ENCODE measurements at regions of chr17 and their contacts with region 1.

Region 1: DNA sequence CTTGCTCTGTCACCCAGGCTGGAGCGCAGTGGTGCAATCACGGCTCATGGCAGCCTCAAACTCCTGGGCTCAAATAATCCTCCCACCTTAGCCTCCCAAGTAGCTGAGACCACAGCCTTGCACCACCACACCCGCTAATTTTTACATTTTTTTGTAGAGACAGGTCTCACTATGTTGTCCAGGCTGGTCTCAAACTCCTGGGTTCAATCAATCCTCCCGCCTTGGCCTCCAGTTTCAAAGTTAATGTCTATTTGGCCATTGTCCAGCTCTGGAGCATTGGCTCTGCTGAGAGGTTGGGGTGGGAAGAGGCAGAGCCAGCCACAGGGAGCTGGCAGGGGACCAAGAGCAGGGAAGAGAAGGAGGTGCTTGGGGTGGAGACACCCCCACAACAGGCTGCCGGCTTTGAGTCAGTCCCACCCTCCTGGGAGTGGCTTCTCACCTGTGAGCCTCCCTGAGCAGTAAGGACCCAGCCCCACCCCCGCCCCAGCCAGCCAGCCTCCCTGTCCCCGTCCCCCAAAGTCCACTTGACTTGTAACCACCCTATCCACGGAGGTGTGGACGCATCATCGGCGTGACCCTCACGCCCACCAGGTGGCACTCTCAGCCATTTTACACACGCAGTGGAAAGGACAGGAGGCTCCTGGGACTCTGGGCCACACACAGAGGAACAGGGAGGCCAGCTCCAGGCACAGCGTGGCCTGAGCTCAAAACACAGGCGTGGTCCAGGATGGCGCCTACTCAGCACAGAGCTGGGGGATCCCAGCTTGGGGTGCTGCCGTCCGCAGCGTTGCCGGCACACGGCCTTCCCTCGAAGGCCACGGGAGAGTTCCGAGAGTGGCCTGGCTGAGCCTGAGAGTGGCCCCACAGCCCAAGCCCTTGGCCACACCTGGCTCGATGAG is 22.8 kb upstream of the PVALEF start:
- DNase-seq: peak; percentile 71 to 88 (median 81)
- ATAC-seq: peak; percentile 90 to 97 (median 94)
- H3K4me3 ChIP-seq: no peak overlapping the region
- H3K27ac ChIP-seq: no peak overlapping the region
- H3K4me1 ChIP-seq: peaks cover 0 to 9% (median 4%) of the 10 kb centered on the region in 12 donors
- H3K27me3 ChIP-seq: no peaks in the 10 kb centered on the region
- CTCF ChIP-seq: peak; percentile 57 to 82 (median 70)
- POLR2A ChIP-seq: no peak

Region 2: GRCh38 chr17:81200695-81201580 is 58.4 kb after region 1 on chr17:
- intact Hi-C with region 1: loop called in 5 of 10 experiments (anchors 1 to 5 kb)
- DNase-seq: peak in 4 of 5 donors; percentile 46 to 61 (median 55)
- ATAC-seq: peak; percentile 29 to 75 (median 62)
- H3K4me3 ChIP-seq: no peak overlapping the region
- H3K27ac ChIP-seq: no peak overlapping the region
- H3K4me1 ChIP-seq: peaks cover 0 to 19% (median 8%) of the 10 kb centered on the region in 12 donors
- H3K27me3 ChIP-seq: no peaks in the 10 kb centered on the region
- CTCF ChIP-seq: peak; percentile 51 to 69 (median 56)
- POLR2A ChIP-seq: no peak

Region 3: DNA sequence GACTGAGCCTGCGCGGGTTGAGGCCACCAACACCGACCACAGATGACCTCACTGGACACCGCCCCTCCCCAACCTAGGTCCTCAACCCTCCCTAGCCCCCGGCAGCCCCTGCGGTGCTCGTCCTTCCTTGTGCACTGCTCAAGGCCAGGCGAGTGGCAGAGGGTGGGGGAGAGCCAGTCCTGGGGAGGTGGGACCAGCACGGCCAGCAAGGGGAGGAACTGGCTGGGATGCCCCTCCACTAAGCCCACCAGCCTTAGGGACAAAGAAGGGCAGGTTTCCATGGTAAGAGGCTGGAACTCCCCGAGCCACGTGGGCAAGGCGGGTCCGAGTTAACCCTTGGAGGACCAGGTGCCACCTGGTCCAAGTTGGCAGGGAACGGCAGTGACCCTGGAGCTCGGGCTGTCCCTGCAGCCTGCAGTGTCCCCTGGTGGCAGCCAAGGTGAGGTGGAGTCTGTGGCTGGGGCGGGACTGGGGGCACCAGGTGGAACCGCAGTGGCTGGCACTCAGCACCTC is 394.8 kb after region 1 on chr17:
- intact Hi-C with region 1: loop called in 1 of 10 experiments (anchors 5 kb)
- DNase-seq: no peak
- ATAC-seq: peak; percentile 37 to 68 (median 55)
- H3K4me3 ChIP-seq: no peak overlapping the region
- H3K27ac ChIP-seq: no peak overlapping the region
- H3K4me1 ChIP-seq: peaks cover 0 to 21% (median 16%) of the 10 kb centered on the region in 12 donors
- H3K27me3 ChIP-seq: peaks cover 0 to 36% (median 30%) of the 10 kb centered on the region in 9 donors
- CTCF ChIP-seq: peak; percentile 50 to 73 (median 65)
- POLR2A ChIP-seq: no peak

Region 4: GRCh38 chr17:82205719-82206508 is 1063.4 kb after region 1 on chr17:
- intact Hi-C with region 1: no loop called
- DNase-seq: peak; percentile 81 to 91 (median 84)
- ATAC-seq: peak; percentile 57 to 87 (median 86)
- H3K4me3 ChIP-seq: peak overlapping the region in 7 of 12 donors; percentile 11 to 41 (median 17)
- H3K27ac ChIP-seq: peak overlapping the region in 11 of 12 donors; percentile 15 to 86 (median 48)
- H3K4me1 ChIP-seq: peaks cover 0 to 19% (median 8%) of the 10 kb centered on the region in 12 donors
- H3K27me3 ChIP-seq: no peaks in the 10 kb centered on the region
- CTCF ChIP-seq: peak; percentile 79 to 95 (median 92)
- POLR2A ChIP-seq: no peak

Measured in heart left ventricle (tissue), 16 donors.